MCF 10A (cell line): ENCODE measurements at regions of chr9 and their contacts with region 1.

Region 1: DNA sequence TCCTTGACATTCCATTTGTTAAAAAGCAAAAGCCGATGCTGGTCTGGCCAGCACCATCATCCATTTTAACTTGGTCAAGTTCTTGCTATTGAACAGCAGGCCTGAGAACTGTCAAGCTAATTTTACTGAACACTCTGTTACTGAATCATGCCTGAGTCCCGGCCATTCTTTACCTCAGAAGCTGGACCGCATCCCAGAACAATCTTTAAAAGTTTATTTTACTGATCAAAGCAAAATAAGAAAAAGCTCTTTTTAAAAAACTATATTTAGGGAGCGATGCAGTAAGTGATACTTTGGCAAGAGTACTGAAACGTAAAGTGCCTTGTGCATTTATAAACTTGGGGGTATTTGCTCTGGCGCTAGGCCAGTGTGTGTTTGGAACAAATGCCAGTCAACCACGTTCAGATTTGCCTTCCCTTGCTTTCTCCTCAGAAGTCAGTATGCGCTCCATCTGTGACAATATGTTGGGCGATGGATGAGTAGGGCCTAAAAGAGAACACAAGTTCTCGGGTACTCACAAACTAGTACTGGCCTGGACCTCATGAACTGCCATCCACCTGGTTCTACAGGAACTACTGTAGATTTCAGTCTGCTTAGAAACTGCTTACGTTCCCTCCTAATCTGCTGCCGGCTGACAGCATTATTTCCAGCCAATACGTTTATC is 161.9 kb downstream of the MAPKAP1 start:
- DNase-seq: peak; percentile 11
- H3K4me3 Mint-ChIP-seq: no peak overlapping the region
- H3K27ac Mint-ChIP-seq: no peak overlapping the region
- H3K4me1 Mint-ChIP-seq: peaks cover 33% of the 10 kb centered on the region
- H3K27me3 Mint-ChIP-seq: no peaks in the 10 kb centered on the region
- CTCF ChIP-seq: no peak

Region 2: DNA sequence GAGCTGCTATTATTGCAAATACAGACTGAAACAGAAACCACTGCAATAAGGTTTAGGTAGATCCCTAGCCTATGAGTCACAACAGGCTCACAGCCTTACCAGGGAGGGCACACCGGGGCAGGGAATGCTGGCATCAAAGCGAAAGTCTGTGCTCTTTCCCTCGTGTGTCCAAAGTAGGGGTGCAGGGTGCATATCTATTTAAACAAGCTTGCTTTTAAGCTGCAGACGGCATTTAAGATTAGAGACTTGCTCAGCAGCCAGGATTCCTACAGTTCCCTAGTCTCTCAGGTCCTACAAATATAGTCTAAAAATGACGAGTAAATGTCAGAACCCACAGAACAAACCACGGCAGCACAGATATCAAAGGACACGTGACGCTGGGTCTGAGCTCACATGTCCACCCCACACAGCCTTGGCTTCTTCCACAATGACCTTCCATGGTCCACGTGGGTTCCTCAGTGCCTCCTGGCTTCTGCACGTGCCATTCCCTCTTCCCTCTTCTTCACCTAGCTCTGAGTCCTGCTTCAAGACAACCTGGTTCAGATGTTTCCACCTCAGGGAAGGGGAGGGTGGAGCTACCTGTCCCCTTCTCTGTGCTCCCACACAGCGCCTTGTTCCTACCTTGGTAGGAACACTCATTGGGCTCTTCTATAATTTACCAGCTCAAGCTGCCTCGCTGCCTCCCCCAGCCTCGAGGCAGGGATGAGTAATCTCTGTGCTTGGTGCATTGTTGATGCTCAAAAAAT is 31.3 kb before region 1 on chr9:
- CTCF ChIA-PET with region 1: no interaction called
- POLR2A ChIA-PET with region 1: interaction called, 14 read pairs
- intact Hi-C with region 1: no loop called
- DNase-seq: peak; percentile 88
- H3K4me3 Mint-ChIP-seq: peak overlapping the region; percentile 73
- H3K27ac Mint-ChIP-seq: peak overlapping the region; percentile 29
- H3K4me1 Mint-ChIP-seq: peaks cover 17% of the 10 kb centered on the region
- H3K27me3 Mint-ChIP-seq: no peaks in the 10 kb centered on the region
- CTCF ChIP-seq: no peak